ENCODE measurements at regions of chr11 and their contacts with region 1.

Region 1: DNA sequence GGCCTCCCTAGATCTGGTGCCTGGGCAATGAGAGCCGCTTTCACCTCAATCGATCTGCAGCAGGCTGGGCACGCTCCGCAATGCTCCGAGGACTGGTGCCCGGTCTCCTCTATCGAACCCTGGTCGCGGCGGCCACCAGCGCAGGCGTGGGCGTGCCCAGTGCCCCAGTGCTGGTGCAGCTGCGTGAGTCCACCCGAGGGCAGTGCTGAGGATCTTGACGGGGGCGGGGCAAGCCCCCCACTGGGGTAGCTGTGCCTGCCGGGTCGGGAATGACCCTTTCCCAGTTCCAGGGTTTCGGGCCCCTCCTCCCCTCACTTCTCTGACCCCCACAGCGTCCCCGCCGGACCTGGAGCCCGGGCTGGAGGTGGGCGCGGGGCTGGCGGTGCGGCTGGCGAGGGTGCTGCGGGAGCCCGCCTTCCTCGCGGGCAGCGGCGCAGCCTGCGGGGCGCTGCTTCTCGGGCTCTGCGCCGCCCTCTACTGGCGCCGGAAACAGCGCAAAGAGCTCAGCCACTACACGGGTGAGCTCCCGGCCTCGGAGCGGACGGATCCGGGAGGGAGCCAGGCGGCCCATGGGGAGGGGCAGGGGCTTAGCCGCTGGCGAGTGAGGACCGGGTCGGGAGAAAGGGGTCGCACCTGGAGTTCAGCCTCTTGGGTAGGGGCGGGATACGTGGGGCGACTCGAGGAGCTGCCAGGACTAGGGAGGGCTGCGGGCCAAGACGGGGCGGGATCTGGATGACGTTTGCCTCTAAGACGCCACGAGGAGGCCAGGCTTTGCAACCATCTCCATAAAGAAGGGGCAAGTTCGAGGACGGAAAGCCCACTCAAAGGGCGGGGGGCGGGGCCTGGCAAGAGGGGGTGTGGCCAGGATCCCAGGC is 10.9 kb downstream of the ROBO3 start:
- DNase-seq: peak; percentile 54 to 87 (median 70)
- ATAC-seq: peak; percentile 93 to 96 (median 94)
- H3K4me3 ChIP-seq: peak overlapping the region; percentile 64 to 81
- H3K4me3 Mint-ChIP-seq: peak overlapping the region; percentile 83 to 84 (median 83)
- H3K27ac ChIP-seq: peak overlapping the region; percentile 68
- H3K27ac Mint-ChIP-seq: peak overlapping the region in 1 of 2 donors; percentile 72
- H3K4me1 ChIP-seq: peaks cover 0 to 24% of the 10 kb centered on the region in 2 experiments
- H3K4me1 Mint-ChIP-seq: peaks cover 21 to 26% (median 23%) of the 10 kb centered on the region in 3 donors
- H3K27me3 ChIP-seq: peaks cover 0 to 53% of the 10 kb centered on the region in 2 experiments
- H3K27me3 Mint-ChIP-seq: peaks cover 30 to 35% of the 10 kb centered on the region in 2 donors

Region 2: GRCh38 chr11:124586238-124586860 is 289.8 kb before region 1 on chr11:
- CTCF ChIA-PET with region 1: no interaction called
- POLR2A ChIA-PET with region 1: no interaction called
- DNase-seq: peak in 28 of 35 experiments; percentile 5 to 58 (median 18)
- ATAC-seq: no peak
- H3K4me3 ChIP-seq: no peak overlapping the region
- H3K4me3 Mint-ChIP-seq: no peak overlapping the region
- H3K27ac ChIP-seq: no peak overlapping the region
- H3K27ac Mint-ChIP-seq: no peak overlapping the region
- H3K4me1 ChIP-seq: no peaks in the 10 kb centered on the region
- H3K4me1 Mint-ChIP-seq: no peaks in the 10 kb centered on the region
- H3K27me3 ChIP-seq: peaks cover 0 to 10% of the 10 kb centered on the region in 2 experiments
- H3K27me3 Mint-ChIP-seq: peaks cover 15 to 21% of the 10 kb centered on the region in 2 donors

Region 3: DNA sequence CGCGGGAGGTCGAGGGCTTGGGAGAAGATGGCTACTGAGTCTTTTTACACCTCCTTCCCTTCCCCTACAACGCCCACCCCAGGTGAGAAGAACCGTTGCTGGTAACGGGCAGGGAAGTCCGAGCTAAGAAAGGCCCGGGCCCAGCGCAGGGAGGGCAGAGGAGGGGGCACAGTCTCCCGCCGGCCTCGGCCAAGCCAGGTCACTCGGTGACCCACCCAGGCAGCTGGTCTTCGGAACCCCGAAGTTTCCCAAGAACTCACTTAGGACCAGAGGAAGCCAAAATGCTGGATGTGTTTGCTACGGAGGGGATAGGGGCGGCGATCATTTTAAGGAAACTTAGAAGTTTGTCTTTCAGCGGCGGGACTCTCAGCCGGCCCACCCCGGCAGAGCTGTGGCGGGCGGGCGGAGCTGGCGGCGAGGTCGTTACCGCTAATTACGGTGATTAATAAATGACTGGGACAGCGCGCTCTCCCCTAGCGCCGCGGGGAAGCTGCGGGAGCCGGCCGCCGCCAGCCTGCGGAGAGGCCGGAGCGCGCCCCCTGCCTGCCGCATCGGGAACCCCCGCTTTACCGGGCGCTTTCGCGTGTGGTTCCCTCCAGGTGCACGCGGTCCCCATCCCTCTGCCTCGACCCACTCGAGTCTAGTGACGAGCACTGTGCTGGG is 10.1 kb before region 1 on chr11:
- CTCF ChIA-PET with region 1: interaction called, 6 to 14 read pairs
- POLR2A ChIA-PET with region 1: no interaction called
- DNase-seq: peak in 27 of 35 experiments; percentile 12 to 69 (median 38)
- ATAC-seq: peak; percentile 51 to 74 (median 62)
- H3K4me3 ChIP-seq: peak overlapping the region in 1 of 2 donors; percentile 29
- H3K4me3 Mint-ChIP-seq: peak overlapping the region in 2 of 3 donors; percentile 39 to 44
- H3K27ac ChIP-seq: no peak overlapping the region
- H3K27ac Mint-ChIP-seq: no peak overlapping the region
- H3K4me1 ChIP-seq: peaks cover 0 to 47% of the 10 kb centered on the region in 2 experiments
- H3K4me1 Mint-ChIP-seq: peaks cover 52 to 56% (median 52%) of the 10 kb centered on the region in 3 donors
- H3K27me3 ChIP-seq: peaks cover 28 to 98% of the 10 kb centered on the region in 2 experiments
- H3K27me3 Mint-ChIP-seq: peaks cover 74 to 94% of the 10 kb centered on the region in 2 donors

Region 4: DNA sequence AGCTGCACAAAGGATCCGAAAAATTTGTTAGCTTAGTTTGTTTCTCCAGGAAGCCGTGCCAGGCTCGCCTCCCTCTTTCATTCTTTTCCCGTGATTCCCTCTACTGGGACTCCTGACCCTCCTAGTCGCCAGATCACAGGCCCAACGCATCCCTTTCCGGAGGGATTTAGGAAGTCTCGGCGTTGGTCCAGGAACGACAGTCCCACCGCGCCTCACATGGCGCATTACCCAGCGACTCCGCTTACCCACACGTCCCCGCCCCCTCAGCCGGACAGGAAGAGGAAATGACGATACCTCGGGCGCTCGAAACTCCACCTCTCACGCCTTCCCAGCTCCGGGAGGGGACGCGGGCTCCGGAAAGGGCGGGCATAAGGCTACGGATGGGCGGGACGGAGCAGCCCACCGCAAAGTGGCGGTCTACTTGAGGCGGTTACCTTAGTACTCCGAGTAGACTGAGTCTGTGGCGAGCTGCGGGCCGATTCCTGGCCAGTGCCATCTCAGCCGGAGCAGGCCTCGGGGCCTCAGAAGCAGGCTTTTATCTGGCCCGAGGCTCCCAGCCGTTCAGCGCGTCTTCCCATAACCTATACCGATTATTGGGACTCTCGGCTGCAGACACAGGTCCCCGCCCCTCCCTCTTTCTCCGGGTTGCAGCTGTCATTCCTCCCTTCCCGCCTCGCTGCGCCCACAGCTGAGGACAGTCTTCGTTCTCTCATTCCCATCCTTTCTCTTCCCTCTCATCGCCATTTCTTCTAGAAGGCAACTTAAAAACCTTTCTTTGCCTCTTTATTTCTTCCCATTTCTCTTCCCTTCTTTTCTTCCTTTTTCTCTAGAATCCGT is 77.8 kb after region 1 on chr11 and contains the start of gene CCDC15:
- CTCF ChIA-PET with region 1: interaction called, 4 to 21 read pairs
- POLR2A ChIA-PET with region 1: interaction called in 1 of 2 experiments, 9 read pairs
- DNase-seq: peak; percentile 89 to 97 (median 93)
- ATAC-seq: peak; percentile 95 to 98 (median 97)
- H3K4me3 ChIP-seq: peak within 1 kb of the TSS; percentile 82 to 90
- H3K4me3 Mint-ChIP-seq: no peak within 1 kb of the TSS
- H3K27ac ChIP-seq: peak within 1 kb of the TSS; percentile 88
- H3K27ac Mint-ChIP-seq: no peak within 1 kb of the TSS
- H3K4me1 ChIP-seq: peaks cover 24 to 40% of the 10 kb centered on the region in 2 experiments
- H3K4me1 Mint-ChIP-seq: peaks cover 0 to 1% (median under 1%) of the 10 kb centered on the region in 3 donors
- H3K27me3 ChIP-seq: no peaks in the 10 kb centered on the region
- H3K27me3 Mint-ChIP-seq: no peaks in the 10 kb centered on the region
- total RNA-seq, gene CCDC15: 1.4 to 3.4 (median 2.1) TPM

Measured in T-cell (primary cell).